AG04450 (cell line): ENCODE measurements at regions of chr17 and their contacts with region 1.

Region 1: GRCh38 chr17:45135192-45135977 is at the start of gene ACBD4:
- DNase-seq: peak; percentile 95
- H3K4me3 ChIP-seq: peak within 1 kb of the TSS; percentile 76
- H3K27ac ChIP-seq: peak within 1 kb of the TSS; percentile 31
- H3K27me3 ChIP-seq: no peaks in the 10 kb centered on the region
- CTCF ChIP-seq: peak; percentile 100
- polyA plus RNA-seq, gene ACBD4: 4.0 and 4.7 TPM in 2 replicates

Region 2: DNA sequence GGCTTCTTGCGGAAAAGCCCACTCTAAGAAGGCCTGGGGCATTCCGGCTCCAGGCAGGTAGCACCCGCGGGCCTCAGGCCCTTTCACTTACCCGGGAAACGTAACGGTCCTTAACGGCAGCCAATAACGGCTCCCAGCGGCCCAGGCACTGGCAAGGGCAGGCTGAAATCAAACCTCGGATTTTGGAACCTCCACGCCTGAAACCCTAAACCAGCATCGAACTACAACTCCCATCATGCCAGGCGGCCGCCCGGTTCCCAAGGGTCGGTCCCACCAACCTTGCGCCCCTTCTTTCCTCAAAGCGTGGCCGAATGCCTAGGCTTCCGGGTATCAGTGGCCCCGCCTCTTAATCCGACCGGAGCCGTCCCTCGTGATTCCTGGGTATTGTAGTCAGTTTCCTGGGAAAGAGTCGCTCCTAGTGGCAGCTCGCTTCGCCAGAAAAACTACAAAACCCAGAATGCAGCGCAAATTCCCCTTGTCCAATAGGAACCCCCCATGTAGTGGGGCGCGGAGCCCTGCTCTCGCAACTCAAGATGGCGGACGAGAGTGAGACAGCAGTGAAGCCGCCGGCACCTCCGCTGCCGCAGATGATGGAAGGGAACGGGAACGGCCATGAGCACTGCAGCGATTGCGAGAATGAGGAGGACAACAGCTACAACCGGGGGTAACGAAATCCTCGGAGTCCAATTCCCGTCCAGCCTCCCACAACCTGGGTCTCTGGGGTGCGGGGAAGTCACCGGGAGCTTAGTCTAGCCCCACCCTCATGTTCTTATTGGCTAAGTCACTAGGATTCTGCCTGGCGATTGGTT is 74.4 kb before region 1 on chr17 and contains the start of gene NMT1:
- CTCF ChIA-PET with region 1: interaction called, 14 read pairs
- POLR2A ChIA-PET with region 1: no interaction called
- DNase-seq: peak; percentile 98
- H3K4me3 ChIP-seq: peak within 1 kb of the TSS; percentile 91
- H3K27ac ChIP-seq: peak within 1 kb of the TSS; percentile 84
- H3K27me3 ChIP-seq: no peaks in the 10 kb centered on the region
- CTCF ChIP-seq: no peak
- polyA plus RNA-seq, gene NMT1: 60.6 and 63.6 TPM in 2 replicates

Region 3: DNA sequence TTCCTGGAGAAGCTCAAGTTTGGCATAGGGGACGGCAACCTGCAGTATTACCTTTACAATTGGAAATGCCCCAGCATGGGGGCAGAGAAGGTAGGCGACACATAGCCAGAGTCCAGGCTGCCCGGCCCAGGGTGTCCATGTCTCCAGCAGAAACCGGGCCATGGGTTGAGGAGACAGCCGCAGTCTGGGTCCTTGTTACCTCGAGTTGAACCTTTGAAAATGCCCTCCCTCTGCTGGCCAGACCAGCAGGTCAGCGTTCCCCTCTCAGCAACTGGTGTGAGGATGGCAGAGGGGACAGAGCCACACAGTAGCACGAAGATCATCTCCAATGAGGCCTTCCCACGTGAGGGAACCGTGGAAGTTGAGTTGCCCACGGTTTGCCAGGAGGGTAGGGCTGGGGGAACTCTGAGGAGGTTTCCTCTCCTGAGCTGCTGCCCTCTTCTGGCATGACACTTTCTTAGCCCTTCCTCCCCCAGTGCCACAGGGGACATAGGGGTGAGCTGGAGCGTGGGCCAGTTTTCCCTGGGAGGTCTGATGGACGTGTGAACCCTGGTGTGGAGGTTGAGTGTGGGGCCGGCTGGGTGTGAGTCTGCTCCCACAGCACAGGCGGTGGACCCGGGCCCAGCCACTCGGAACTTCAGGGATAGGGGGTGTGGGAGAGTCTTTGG is 30.3 kb before region 1 on chr17:
- CTCF ChIA-PET with region 1: interaction called, 38 read pairs
- POLR2A ChIA-PET with region 1: no interaction called
- DNase-seq: no peak
- H3K4me3 ChIP-seq: no peak overlapping the region
- H3K27ac ChIP-seq: no peak overlapping the region
- H3K27me3 ChIP-seq: no peaks in the 10 kb centered on the region
- CTCF ChIP-seq: no peak

Region 4: DNA sequence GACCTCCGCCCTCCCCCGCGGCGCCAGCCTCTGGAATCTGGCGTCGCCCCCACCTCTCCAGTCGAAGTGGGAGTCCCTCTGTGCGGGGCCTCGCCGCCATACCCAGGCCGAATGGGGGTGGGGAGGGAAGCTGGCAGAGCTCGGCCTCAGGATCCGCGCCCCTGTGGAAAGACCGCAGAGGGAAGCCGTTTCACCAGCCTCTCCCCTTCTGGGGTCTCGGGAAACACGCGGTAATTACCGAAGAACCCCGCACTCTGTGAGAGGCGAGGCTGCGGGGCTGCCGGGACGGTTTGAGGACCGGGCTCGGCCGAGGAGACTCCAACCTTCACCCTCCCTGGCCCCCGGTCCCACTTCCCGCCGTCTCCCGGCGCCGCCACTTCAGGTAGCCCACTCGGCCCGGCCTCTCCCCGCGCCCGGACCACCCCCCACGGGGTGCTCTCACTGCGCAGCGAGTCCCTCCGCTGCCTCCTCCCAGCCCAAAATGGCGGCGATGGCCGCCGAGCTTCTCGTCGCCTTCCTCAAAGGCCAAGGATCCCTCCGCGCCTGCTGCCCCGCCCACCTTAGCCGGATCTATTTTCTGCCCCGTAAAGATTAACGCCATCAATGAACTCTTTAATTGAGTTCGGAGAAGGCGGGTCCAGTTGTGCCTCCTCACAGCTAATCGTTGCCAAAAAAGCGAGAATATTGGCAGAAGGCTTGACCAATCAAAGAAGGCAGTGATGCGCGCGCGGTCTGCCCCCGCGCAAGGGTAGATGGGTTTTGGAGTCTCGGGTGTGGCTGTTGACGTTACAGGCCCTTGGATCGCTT is 25.8 kb after region 1 on chr17:
- CTCF ChIA-PET with region 1: interaction called, 69 read pairs
- POLR2A ChIA-PET with region 1: interaction called, 15 read pairs
- DNase-seq: peak; percentile 100
- H3K4me3 ChIP-seq: peak overlapping the region; percentile 90
- H3K27ac ChIP-seq: peak overlapping the region; percentile 97
- H3K27me3 ChIP-seq: no peaks in the 10 kb centered on the region
- CTCF ChIP-seq: no peak

Region 5: GRCh38 chr17:45218895-45219661 is 83.7 kb after region 1 on chr17:
- CTCF ChIA-PET with region 1: interaction called, 30 read pairs
- POLR2A ChIA-PET with region 1: interaction called, 12 read pairs
- DNase-seq: peak; percentile 61
- H3K4me3 ChIP-seq: peak overlapping the region; percentile 27; the same call in 1 of the 2 replicates
- H3K27ac ChIP-seq: no peak overlapping the region
- H3K27me3 ChIP-seq: peaks cover 24% of the 10 kb centered on the region
- CTCF ChIP-seq: peak; percentile 88

Region 6: DNA sequence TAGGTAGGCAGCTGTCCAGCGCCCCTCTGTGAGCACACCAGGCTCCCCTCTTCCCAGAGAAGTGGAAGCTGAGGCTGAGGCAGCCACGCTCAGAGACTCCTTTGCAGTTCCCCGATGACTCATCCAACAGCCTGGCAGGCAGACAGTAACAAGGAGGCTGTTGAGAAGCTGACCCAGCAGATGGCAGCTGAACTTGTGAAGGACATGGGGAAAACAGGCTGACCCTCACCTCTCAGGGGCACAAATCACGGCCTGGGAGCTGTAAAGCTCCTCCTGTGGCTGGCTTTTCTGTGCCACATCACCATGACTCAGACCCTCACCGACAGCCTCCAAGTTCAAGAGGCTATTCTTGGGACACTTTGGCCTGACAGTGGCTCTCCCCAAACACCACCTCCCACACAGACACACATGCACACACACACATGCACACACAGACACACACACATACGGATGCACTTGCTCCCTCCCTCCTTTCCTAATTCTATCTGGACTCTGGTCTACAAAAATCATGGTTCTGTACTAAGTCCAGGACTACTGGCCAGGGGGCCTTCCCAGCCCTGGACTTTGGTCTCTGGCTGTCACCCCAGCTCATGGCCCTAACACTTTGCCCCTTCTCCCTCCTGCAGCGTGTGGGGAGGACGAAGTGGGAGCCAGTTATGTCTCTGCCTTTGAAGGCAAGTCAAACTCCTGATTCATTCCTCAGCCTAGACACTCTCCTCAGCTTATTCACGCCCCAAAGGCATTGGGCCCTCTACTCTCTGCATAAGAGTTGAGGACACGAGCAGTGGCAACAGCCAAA is 158.2 kb after region 1 on chr17:
- CTCF ChIA-PET with region 1: interaction called, 10 read pairs
- POLR2A ChIA-PET with region 1: no interaction called
- DNase-seq: peak; percentile 65
- H3K4me3 ChIP-seq: no peak overlapping the region
- H3K27ac ChIP-seq: peak overlapping the region; percentile 87
- H3K27me3 ChIP-seq: no peaks in the 10 kb centered on the region
- CTCF ChIP-seq: no peak; the same call in 1 of the 2 replicates